Vagina (tissue), 2 donors: ENCODE measurements at regions of chr3 and their contacts with region 1.

Region 1: DNA sequence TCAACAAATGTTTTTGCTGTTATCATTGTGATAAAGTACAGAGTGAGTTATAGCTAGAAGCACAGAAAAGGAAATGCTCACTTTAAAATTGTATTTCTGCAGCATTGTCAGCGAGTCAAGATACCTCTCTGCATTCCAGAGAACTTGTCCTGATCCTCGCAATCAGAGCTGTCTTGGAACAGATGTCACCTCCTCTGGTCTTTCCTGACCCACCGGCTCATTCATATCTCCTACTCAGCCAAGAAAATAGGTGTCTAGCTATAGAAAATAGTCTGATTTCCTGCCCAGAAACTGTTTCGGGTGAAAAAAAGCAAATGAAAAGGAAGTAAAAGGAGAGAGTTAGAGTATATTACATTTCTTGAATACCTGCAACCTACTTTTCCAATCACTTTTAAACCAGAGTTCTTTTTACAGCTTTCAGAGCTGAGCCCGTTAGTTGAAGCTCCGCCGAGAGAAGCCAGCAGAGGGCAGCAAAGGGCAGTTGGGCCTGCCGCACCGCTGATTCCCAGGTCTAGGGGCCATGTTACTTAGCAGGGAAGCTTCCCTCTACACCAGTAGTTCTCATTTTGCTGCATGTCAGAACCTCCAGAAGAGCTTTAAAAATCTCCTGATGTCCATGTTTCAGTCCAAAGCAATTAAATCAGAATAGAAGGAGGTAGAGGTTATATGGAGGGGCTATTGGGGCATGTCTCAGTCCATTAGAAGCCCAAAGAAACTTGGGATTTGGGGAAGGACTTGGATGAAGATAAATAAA is 185.7 kb upstream of the THRB start:
- DNase-seq: no peak
- H3K4me3 ChIP-seq: no peak overlapping the region
- H3K27ac ChIP-seq: no peak overlapping the region
- H3K4me1 ChIP-seq: peaks cover 5% of the 10 kb centered on the region
- H3K27me3 ChIP-seq: no peaks in the 10 kb centered on the region
- CTCF ChIP-seq: peak; percentile 13 to 49 (median 39)
- POLR2A ChIP-seq: no peak

Region 2: GRCh38 chr3:23999012-23999641 is 681.3 kb before region 1 on chr3:
- intact Hi-C with region 1: loop called (anchors 10 kb)
- DNase-seq: no peak
- H3K4me3 ChIP-seq: no peak overlapping the region
- H3K27ac ChIP-seq: no peak overlapping the region
- H3K4me1 ChIP-seq: no peaks in the 10 kb centered on the region
- H3K27me3 ChIP-seq: no peaks in the 10 kb centered on the region
- CTCF ChIP-seq: peak; percentile 67 to 96 (median 77)
- POLR2A ChIP-seq: no peak

Region 3: GRCh38 chr3:24526640-24527212 is 153.7 kb before region 1 on chr3:
- intact Hi-C with region 1: no loop called
- DNase-seq: no peak
- H3K4me3 ChIP-seq: no peak overlapping the region
- H3K27ac ChIP-seq: no peak overlapping the region
- H3K4me1 ChIP-seq: peaks cover 6% of the 10 kb centered on the region
- H3K27me3 ChIP-seq: no peaks in the 10 kb centered on the region
- CTCF ChIP-seq: no peak
- POLR2A ChIP-seq: no peak

Region 4: DNA sequence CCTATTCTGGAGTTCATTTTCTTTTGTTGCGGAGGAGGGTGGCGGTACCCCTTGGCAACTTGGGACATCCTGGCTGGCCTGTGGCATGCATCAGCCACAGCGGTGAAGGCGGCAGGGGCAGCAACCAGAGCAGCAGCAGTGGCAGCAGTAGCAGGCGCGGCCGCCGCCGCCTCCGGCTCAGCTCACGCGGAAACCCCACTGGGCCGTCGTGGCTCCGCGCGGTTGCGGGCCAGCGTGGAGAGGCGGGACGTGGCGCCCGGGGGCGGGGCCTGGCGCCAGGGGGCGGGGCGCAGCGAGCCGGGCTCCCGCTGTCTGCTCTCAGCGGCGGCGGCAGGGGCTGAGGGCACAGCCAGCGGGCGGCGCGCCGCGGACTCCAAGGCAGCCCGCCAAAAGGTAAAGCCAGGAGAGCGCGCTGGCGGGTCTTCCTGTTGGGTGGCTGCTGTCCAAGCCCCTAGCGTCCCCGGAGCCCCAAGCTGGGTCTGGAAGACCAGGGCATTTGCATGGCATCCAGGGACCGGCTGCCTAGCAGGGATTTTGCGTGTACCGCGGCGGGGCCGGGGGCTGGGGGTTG is 148.7 kb after region 1 on chr3:
- intact Hi-C with region 1: no loop called
- DNase-seq: no peak
- H3K4me3 ChIP-seq: peak overlapping the region; percentile 53
- H3K27ac ChIP-seq: no peak overlapping the region
- H3K4me1 ChIP-seq: peaks cover 18% of the 10 kb centered on the region
- H3K27me3 ChIP-seq: no peaks in the 10 kb centered on the region
- CTCF ChIP-seq: no peak
- POLR2A ChIP-seq: no peak